PC-9 (cell line): ENCODE measurements at regions of chr19 and their contacts with region 1.

Region 1: GRCh38 chr19:43191191-43191590 is 4.9 kb upstream of the PSG5 start:
- DNase-seq: no peak
- H3K4me3 ChIP-seq: no peak overlapping the region
- H3K27ac ChIP-seq: no peak overlapping the region
- H3K4me1 ChIP-seq: no peaks in the 10 kb centered on the region
- H3K27me3 ChIP-seq: no peaks in the 10 kb centered on the region
- CTCF ChIP-seq: no peak

Region 2: DNA sequence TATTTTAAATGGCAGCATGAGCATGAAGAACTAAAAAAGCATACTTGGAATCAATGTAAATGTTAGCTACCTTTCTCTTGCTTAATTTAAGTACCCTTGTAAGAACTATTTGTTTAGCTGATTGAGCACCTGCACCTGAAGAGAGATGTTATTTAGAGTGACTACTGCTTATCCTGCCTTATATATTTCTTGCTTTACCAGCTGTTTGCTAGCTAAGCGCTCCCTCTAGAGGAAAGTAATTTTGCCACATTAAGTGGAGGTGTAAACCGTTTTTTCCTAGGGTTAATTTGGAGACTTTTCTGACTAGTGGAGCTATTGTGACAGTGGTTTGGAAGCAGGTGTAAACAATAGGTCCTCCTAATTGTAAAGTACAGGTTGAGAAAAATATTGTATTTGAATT is 89.2 kb before region 1 on chr19:
- CTCF ChIA-PET with region 1: no interaction called
- POLR2A ChIA-PET with region 1: no interaction called
- intact Hi-C with region 1: loop called (anchors 2 kb)
- DNase-seq: no peak
- H3K4me3 ChIP-seq: no peak overlapping the region
- H3K27ac ChIP-seq: no peak overlapping the region
- H3K4me1 ChIP-seq: no peaks in the 10 kb centered on the region
- H3K27me3 ChIP-seq: no peaks in the 10 kb centered on the region
- CTCF ChIP-seq: peak; percentile 38; the same call in 1 of the 2 replicates